Activated CD4-positive, alpha-beta memory T cell treated with anti-CD3 and anti-CD28 coated beads for 36 hours (primary cell): ENCODE measurements at regions of chr7 and their contacts with region 1.

Region 1: DNA sequence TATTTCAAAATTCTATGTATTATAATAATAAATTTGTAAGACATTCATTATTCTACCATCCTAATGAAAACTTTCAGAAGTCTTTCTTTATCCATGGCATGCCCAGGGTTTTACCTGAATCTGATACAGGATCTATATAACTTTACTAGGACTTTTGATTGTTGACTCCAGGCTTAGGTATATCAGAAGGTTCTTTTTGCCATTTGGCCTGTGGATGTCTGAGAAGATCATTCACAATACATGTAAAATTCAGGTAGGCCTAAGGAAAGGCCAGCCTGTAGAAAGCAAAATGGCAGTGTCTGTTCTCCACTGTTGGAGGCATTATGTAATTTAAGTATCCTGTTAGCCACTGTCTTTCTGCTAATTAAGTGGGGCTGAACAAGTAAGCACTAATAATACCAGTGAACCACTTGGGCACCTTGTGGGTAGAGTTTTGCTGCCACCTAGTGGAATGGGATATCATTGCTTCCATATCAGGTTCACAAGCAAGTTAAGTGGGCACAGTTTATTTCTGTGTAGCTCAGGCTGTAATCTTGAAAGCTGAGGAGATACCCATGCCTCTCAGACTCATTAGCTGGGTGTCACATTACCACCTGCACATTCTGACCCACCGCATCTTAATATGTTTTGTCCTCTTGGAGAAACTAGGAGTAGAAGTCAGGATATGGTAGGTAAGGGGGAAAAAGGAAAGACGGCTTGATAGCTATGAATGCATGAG is 105.5 kb downstream of the SEPTIN7 start:
- DNase-seq: peak; percentile 70
- H3K4me3 Mint-ChIP-seq: no peak overlapping the region
- H3K27ac Mint-ChIP-seq: no peak overlapping the region
- H3K4me1 Mint-ChIP-seq: no peaks in the 10 kb centered on the region
- H3K27me3 Mint-ChIP-seq: no peaks in the 10 kb centered on the region

Region 2: DNA sequence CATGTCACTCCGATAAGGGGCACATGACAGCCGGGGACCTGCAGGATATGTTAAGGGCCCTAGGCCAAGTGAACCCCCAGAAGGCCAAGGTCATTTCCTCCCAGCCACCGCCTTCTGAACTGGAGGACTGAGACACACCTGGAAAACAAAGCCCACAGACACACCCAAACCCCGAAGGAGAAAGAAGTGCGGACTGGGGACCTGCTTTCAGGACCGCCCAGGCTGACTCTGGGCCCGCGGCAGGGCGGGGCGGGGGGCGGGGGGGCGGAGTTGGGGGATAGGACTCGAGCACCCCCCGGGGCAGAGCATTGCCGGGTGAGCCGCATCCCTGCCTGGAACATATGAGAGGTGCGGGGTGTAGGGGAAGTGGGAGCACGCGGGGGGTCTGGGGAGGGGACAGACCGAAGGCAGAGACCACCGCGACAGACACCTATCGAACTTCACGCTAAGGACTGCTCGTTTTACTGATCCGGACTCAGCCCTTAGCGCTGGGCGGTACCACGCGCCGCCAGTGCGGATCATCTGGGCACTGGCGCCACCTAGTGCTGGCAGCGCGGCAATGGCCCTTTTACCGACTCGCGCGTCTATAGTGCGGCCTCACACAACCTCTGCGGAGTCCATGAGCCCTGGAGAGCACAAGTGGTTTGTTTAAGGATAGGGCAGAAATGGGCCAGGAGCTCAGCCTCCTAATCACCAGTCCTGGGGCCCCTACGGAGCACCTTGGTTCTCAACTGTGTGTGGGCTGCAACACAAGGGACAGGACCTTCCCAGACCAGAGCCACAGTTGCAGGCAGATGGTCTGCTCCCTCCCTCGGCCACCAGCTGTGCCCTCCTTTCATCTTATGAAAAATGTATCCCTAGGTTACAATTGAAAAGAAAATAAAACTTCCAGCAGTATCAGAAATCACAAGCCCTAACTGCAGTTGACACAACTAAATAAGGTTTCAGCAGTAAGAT is 369.0 kb before region 1 on chr7:
- CTCF ChIA-PET with region 1: no interaction called
- POLR2A ChIA-PET with region 1: no interaction called
- intact Hi-C with region 1: loop called (anchors 2 kb)
- DNase-seq: peak; percentile 80
- H3K4me3 Mint-ChIP-seq: peak overlapping the region; percentile 61
- H3K27ac Mint-ChIP-seq: no peak overlapping the region
- H3K4me1 Mint-ChIP-seq: peaks cover 2% of the 10 kb centered on the region
- H3K27me3 Mint-ChIP-seq: peaks cover 7% of the 10 kb centered on the region

Region 3: GRCh38 chr7:35701287-35701900 is 205.0 kb before region 1 on chr7:
- CTCF ChIA-PET with region 1: interaction called, 10 read pairs
- POLR2A ChIA-PET with region 1: no interaction called
- intact Hi-C with region 1: no loop called
- DNase-seq: peak; percentile 46
- H3K4me3 Mint-ChIP-seq: no peak overlapping the region
- H3K27ac Mint-ChIP-seq: no peak overlapping the region
- H3K4me1 Mint-ChIP-seq: peaks cover 34% of the 10 kb centered on the region
- H3K27me3 Mint-ChIP-seq: no peaks in the 10 kb centered on the region

Region 4: DNA sequence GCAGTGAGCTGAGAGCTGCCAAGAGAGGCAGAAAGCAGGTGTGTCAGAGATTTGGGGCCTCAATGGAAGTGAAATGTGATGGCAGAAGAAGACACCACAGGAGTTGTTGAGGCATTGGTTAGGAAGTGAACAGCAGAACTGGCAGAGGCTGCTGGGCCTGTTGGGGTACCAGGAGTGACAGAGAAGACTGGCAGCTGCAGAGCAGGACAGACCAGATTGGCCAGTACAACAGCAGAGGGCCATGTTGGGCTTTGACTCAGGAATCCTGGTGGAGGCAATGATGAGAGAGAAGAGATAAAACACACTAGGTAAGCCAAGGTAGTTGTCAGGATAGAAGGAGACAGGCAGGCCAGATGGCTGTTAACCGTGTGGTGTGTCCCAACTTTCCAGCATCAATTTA is 191.5 kb before region 1 on chr7:
- CTCF ChIA-PET with region 1: interaction called, 11 read pairs
- POLR2A ChIA-PET with region 1: no interaction called
- intact Hi-C with region 1: no loop called
- DNase-seq: no peak
- H3K4me3 Mint-ChIP-seq: no peak overlapping the region
- H3K27ac Mint-ChIP-seq: no peak overlapping the region
- H3K4me1 Mint-ChIP-seq: peaks cover 5% of the 10 kb centered on the region
- H3K27me3 Mint-ChIP-seq: no peaks in the 10 kb centered on the region